ENCODE measurements at regions of chr11 and their contacts with region 1.

Region 1: GRCh38 chr11:117107701-117108590 is 9.7 kb upstream of the SIK3 start:
- DNase-seq: no peak
- CTCF ChIP-seq: no peak

Region 2: DNA sequence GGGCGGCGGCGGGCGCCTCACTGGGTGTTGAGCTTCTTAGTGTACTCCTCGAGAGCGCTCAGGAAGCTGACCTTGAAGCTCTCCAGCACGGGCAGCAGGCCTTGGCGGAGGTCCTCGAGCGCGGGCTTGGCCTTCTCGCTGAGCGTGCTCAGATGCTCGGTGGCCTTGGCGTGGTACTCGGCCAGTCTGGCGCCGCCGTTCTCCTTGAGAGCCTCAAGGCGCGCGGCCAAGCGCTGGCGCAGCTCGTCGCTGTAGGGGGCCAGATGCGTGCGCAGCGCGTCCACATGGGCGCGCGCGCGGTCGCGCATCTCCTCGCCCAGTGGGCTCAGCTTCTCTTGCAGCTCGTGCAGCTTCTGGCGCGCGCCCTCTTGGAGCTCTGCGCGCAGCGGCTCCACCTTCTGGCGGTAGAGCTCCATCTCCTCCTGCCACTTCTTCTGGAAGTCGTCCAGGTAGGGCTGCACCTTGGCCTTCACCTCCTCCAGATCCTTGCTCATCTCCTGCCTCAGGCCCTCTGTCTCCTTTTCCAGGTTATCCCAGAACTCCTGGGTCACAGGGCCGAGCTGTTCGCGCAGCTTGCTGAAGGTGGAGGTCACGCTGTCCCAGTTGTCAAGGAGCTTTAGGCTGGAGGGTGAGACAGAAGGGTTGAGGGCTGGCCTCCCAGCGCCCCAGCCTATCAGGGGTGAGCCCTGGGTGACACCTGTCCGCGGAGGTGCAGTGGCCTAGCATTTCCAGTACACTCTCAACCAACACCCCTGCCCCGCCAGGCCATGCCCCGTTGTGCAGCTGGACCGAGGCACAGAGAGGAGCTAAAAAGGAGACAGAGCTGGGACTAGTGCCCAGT is 271.9 kb before region 1 on chr11:
- CTCF ChIA-PET with region 1: interaction called, 13 read pairs
- POLR2A ChIA-PET with region 1: no interaction called
- DNase-seq: peak; percentile 90
- CTCF ChIP-seq: peak; percentile 77

Region 3: DNA sequence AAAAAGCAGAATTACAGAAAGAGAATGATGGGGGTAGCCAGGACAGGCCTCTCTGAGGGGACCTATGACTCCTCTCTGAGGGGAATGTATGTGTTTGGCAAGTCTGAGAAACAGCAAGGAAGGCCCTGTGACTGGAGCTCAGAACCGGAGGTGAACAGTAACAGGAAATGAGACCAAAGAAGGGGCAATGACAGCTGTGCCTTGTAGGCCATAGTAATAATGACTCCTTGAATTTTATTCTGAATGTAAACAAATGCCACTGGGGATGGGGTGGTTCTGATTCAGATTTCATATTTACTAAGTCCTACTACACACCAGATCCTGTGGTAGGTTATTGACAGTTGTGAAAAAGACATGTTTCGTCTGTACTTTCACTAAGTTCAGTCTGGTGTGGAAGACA is 217.8 kb before region 1 on chr11:
- CTCF ChIA-PET with region 1: interaction called, 18 read pairs
- POLR2A ChIA-PET with region 1: no interaction called
- DNase-seq: peak; percentile 40
- CTCF ChIP-seq: no peak

Region 4: DNA sequence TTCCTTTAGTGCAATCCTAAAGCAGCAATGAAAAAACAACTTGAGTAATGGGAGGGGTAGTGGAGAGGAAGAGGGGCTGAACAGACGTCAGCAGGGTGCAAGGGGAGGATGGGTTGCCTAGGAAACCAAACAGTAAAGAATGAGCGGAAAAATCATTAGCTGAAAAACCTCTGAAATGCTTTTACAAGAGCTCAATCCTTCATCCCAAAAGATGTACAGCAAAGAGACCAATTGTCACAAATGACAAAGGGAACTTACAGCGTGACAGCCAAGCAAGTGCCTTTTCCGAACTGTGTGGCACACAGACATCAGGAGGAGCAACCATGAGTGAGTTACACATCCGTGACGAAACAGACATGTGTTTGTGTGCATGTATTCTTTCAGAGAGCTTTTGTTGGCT is 114.3 kb before region 1 on chr11:
- CTCF ChIA-PET with region 1: no interaction called
- POLR2A ChIA-PET with region 1: no interaction called
- DNase-seq: no peak
- CTCF ChIP-seq: no peak

Region 5: GRCh38 chr11:117127171-117127901 is 19.4 kb after region 1 on chr11:
- CTCF ChIA-PET with region 1: interaction called, 17 read pairs
- POLR2A ChIA-PET with region 1: no interaction called
- DNase-seq: no peak
- CTCF ChIP-seq: no peak